ENCODE measurements at regions of chr1 and their contacts with region 1.

Region 1: DNA sequence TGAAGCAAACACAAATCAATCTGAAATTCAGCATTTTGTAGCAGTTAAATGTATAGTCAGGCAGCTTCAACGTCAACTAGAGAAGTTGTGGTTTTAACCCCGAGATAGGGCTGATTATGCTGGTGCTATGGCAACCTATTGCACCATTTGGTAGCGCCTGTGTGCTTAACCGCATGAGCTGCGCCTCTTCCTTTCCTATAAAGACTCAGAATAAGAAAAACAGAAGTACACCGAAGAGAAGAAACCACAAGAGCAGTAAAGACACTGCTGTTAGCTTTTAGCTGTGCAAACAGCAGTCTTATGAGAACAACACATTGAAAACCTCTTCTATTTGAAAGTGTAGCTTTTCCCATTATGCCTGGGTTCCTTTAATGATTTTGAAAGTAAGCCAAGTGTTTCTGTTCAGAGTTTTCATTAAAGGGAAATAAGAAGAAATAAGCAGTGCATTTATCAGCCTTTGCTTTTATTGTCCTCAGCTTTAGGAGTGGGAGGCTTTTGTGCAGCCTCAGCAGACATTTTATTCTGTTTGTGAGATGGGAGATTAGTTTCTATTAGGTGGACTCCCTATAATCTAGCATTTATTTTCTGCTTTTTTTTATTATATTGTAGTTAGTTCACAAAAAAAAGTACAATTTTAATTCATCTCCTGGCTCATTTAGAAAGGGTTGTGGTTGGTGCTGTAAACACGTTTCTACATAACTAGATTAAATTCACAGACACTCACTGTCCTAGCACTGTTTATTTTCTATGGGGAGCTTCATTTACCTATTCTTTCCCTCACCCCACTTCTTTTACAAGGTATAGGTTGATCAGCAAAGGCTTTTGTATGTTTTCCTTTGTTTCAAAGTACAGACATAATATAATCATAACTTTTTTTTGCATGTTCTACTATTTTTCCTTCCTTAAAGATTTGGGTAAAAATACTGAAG is 43.3 kb downstream of the PTPRC start:
- DNase-seq: peak; percentile 95
- H3K4me3 Mint-ChIP-seq: peak overlapping the region; percentile 75
- H3K27ac Mint-ChIP-seq: peak overlapping the region; percentile 91
- H3K4me1 Mint-ChIP-seq: peaks cover 71% of the 10 kb centered on the region
- H3K27me3 Mint-ChIP-seq: no peaks in the 10 kb centered on the region

Region 2: DNA sequence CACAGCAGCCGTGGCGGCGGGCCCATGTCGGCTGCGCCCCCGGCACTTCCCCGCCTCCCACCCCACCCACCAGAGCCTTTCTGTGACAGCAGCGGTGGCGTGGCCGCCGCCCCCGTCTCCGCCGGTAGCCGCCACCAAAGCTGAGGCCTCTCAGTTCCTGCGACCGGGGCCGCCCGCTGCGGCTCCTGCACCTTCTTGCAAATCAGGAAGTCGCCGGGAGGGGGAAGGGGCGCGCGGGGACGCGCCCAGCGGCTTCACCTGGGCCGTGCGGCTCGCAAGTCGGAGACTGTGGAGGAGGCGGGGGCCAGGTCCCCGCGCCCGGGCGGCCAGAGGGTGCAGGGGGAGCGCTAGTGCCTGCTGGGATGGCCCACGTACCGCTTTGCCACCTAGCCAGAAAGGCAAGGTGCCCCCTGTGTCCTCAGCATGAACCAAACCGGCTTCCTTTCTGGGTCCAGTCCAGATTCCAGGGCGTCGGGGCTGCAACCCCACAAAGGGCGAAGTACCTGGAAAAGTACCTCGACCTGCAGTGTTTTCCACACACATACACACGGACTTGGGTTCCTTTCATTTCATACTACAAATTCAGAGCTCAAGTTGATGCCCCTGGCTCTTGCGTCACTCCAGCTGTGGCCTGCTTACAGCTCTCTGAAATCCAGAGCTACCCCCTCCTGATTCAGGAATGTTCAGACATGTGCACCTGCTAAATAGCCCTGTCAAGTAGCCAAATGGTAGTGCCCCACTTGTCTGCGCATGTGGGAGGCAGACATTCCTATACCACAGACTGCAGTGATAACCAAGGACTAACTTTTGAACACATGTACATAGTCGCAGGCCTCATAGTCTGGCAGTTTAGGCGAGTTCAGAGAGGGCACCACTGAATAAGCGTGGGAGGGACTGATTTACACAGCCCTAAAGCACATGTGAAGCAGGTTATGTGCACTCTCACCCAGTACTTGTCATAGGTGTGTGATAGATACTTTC is 906.5 kb before region 1 on chr1 and contains the start of gene DENND1B:
- intact Hi-C with region 1: loop called (anchors 1 kb)
- DNase-seq: peak; percentile 95
- H3K4me3 Mint-ChIP-seq: peak within 1 kb of the TSS; percentile 89
- H3K27ac Mint-ChIP-seq: peak within 1 kb of the TSS; percentile 99
- H3K4me1 Mint-ChIP-seq: peaks cover 61% of the 10 kb centered on the region
- H3K27me3 Mint-ChIP-seq: no peaks in the 10 kb centered on the region
- total RNA-seq, gene DENND1B: 15.0 and 16.8 TPM in 2 replicates

Region 3: GRCh38 chr1:198359024-198359653 is 323.0 kb before region 1 on chr1:
- intact Hi-C with region 1: loop called (anchors 10 kb)
- DNase-seq: no peak
- H3K4me3 Mint-ChIP-seq: no peak overlapping the region
- H3K27ac Mint-ChIP-seq: no peak overlapping the region
- H3K4me1 Mint-ChIP-seq: no peaks in the 10 kb centered on the region
- H3K27me3 Mint-ChIP-seq: peaks cover 8% of the 10 kb centered on the region

Region 4: GRCh38 chr1:198601936-198602889 is 79.9 kb before region 1 on chr1:
- intact Hi-C with region 1: loop called (anchors 1 kb)
- DNase-seq: no peak
- H3K4me3 Mint-ChIP-seq: peak overlapping the region; percentile 32
- H3K27ac Mint-ChIP-seq: peak overlapping the region; percentile 83
- H3K4me1 Mint-ChIP-seq: peaks cover 55% of the 10 kb centered on the region
- H3K27me3 Mint-ChIP-seq: no peaks in the 10 kb centered on the region

Region 5: GRCh38 chr1:198620951-198621824 is 60.9 kb before region 1 on chr1:
- intact Hi-C with region 1: loop called (anchors 1 kb)
- DNase-seq: peak; percentile 92
- H3K4me3 Mint-ChIP-seq: peak overlapping the region; percentile 85
- H3K27ac Mint-ChIP-seq: peak overlapping the region; percentile 99
- H3K4me1 Mint-ChIP-seq: peaks cover 64% of the 10 kb centered on the region
- H3K27me3 Mint-ChIP-seq: no peaks in the 10 kb centered on the region

Region 6: GRCh38 chr1:198633675-198634121 is 48.4 kb before region 1 on chr1:
- intact Hi-C with region 1: no loop called
- DNase-seq: peak; percentile 68
- H3K4me3 Mint-ChIP-seq: peak overlapping the region; percentile 61
- H3K27ac Mint-ChIP-seq: peak overlapping the region; percentile 81
- H3K4me1 Mint-ChIP-seq: peaks cover 69% of the 10 kb centered on the region
- H3K27me3 Mint-ChIP-seq: no peaks in the 10 kb centered on the region

Region 7: DNA sequence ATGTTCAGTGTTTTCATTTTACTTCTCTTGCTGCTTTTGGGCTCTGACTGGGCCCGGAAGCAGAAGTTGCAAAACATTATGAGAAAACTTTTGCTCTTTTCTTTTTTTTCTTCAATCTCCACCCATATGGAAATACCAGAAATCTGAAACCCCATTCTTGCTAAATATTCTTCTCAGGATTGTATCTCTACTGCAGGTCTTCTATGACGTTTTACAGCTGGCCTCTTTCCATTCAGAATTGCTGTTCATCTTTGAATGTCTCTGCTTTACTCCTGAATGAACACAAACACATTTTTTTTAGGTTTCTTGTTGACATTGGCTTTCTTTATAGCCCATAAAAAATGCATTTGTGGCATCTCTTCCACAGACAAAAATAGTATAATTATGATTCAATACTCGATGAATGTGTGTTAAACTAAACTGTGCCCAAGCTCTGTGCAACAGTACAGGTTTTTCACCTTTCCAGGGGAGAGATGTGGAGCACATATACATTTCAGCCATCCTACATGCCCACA is 24.5 kb before region 1 on chr1:
- intact Hi-C with region 1: loop called (anchors 1 kb)
- DNase-seq: peak; percentile 77
- H3K4me3 Mint-ChIP-seq: peak overlapping the region; percentile 92
- H3K27ac Mint-ChIP-seq: peak overlapping the region; percentile 86
- H3K4me1 Mint-ChIP-seq: peaks cover 43% of the 10 kb centered on the region
- H3K27me3 Mint-ChIP-seq: no peaks in the 10 kb centered on the region